AG04449 (cell line): ENCODE measurements at regions of chr6 and their contacts with region 1.

Region 1: DNA sequence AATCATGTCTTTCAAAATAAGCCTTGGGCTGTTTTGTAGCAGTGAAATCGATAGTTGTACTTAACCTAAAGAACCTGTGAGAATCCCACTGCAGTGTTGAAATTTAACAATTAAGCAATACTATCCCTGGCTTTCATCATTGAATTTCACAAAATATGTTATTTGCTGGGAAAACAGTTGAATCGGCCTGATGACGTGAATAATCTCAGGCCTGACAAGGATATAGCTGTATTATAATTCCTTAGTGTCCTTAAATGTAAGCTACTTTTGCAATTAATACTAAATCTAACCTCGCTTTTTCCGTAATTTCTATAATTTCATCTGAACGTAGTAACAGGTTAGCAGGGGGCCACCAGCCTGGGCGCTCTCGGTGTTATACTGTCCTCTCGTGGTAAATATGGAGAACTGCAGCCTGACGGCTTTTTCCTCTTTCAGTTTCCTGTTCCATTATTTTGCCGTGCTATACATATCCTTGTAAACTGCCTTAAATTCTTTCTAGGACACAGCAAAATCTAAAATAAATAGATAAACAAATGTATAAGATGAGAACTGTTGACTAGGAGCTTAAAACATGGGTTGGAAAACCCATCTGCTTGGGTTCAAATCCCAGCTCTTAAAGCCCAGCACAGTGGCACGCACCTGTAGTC is 24.0 kb downstream of the MTFR2 start:
- DNase-seq: no peak
- H3K4me3 ChIP-seq: no peak overlapping the region
- CTCF ChIP-seq: peak; percentile 88

Region 2: GRCh38 chr6:135497412-135498269 is 728.5 kb before region 1 on chr6 and contains the start of gene AHI1:
- CTCF ChIA-PET with region 1: interaction called, 17 read pairs
- POLR2A ChIA-PET with region 1: no interaction called
- DNase-seq: peak; percentile 47
- H3K4me3 ChIP-seq: peak within 1 kb of the TSS; percentile 82
- CTCF ChIP-seq: peak; percentile 1

Region 3: GRCh38 chr6:135535989-135536414 is 690.1 kb before region 1 on chr6:
- CTCF ChIA-PET with region 1: interaction called, 75 read pairs
- POLR2A ChIA-PET with region 1: no interaction called
- DNase-seq: peak; percentile 88
- H3K4me3 ChIP-seq: no peak overlapping the region
- CTCF ChIP-seq: peak; percentile 31

Region 4: GRCh38 chr6:135951169-135951568 is 275.0 kb before region 1 on chr6:
- CTCF ChIA-PET with region 1: interaction called, 10 read pairs
- POLR2A ChIA-PET with region 1: no interaction called
- DNase-seq: no peak
- H3K4me3 ChIP-seq: no peak overlapping the region
- CTCF ChIP-seq: no peak

Region 5: GRCh38 chr6:136201732-136202131 is 24.4 kb before region 1 on chr6:
- CTCF ChIA-PET with region 1: interaction called, 13 read pairs
- POLR2A ChIA-PET with region 1: no interaction called
- DNase-seq: no peak
- H3K4me3 ChIP-seq: no peak overlapping the region
- CTCF ChIP-seq: no peak